ENCODE measurements at regions of chr5 and their contacts with region 1.

Region 1: GRCh38 chr5:9207817-9208418 is 338.0 kb downstream of the SEMA5A start:
- ATAC-seq: peak; percentile 33 to 79 (median 62)
- H3K4me3 ChIP-seq: no peak overlapping the region
- H3K27ac ChIP-seq: no peak overlapping the region
- H3K4me1 ChIP-seq: no peaks in the 10 kb centered on the region

Region 2: GRCh38 chr5:7886849-7887475 is 1321.0 kb before region 1 on chr5:
- in situ Hi-C with region 1: loop called in 1 of 9 experiments (anchors 25 kb)
- ATAC-seq: peak in 4 of 8 experiments; percentile 47 to 61 (median 52)
- H3K4me3 ChIP-seq: no peak overlapping the region
- H3K27ac ChIP-seq: no peak overlapping the region
- H3K4me1 ChIP-seq: no peaks in the 10 kb centered on the region

Region 3: GRCh38 chr5:7904170-7904569 is 1303.7 kb before region 1 on chr5:
- in situ Hi-C with region 1: loop called in 2 of 9 experiments (anchors 25 kb)
- ATAC-seq: peak in 2 of 8 experiments; percentile 40 to 67
- H3K4me3 ChIP-seq: no peak overlapping the region
- H3K27ac ChIP-seq: no peak overlapping the region
- H3K4me1 ChIP-seq: no peaks in the 10 kb centered on the region

Region 4: DNA sequence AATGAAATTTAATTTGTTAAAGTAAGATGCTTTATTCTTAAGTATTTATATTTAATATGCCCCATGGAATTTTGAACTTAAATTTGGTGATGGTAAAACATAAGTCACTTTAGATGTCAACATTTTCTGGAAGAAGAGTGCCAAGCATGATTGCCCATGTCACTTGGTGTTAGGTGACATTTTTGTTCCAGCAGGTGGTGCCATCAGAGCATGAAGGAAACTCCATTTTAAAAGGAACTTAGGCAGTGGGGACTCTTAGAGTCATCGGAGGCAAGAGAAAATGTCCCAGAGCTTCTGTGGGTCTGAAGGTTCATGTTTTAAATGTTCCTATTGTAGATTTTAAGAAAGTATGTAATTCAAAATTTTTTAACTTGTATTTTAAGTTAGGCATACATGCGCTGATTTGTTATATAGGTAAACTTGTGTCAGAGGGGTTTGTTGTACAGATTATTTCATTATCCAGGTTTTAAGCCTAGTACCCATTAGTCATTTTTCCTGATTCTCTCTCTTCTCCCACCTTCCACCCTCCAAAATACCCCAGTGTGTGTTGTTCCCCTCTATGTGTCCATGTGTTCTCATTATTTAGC is 451.3 kb before region 1 on chr5:
- in situ Hi-C with region 1: loop called in 3 of 9 experiments (anchors 25 kb)
- ATAC-seq: peak in 5 of 8 experiments; percentile 48 to 74 (median 62)
- H3K4me3 ChIP-seq: no peak overlapping the region
- H3K27ac ChIP-seq: no peak overlapping the region
- H3K4me1 ChIP-seq: no peaks in the 10 kb centered on the region

Region 5: DNA sequence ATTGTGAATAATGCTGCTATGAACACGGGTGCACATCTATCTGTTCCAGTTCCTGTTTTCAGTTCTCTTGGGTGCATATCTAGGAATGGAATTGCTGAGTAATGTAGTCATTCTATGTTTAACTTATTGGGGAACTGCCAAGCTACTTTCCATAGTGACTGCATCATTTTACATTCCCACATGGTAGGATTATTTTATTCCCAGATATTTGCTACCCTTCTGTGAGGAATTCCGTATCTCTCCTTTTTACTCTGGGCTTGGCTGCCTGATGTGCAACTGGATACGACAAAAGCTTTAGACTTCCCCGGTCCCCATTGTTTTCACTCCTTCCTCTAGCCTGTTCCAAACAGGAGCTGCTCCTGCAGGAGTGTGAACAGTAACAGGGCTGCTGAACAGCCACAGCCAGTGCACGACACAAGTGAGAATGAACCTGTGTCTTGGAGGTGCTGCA is 415.1 kb after region 1 on chr5:
- in situ Hi-C with region 1: no loop called
- ATAC-seq: peak in 4 of 8 experiments; percentile 34 to 90 (median 90)
- H3K4me3 ChIP-seq: no peak overlapping the region
- H3K27ac ChIP-seq: no peak overlapping the region
- H3K4me1 ChIP-seq: no peaks in the 10 kb centered on the region